AG04449 (cell line): ENCODE measurements at regions of chr1 and their contacts with region 1.

Region 1: GRCh38 chr1:174800216-174800851 is 199.4 kb upstream of the CACYBP start:
- DNase-seq: no peak
- H3K4me3 ChIP-seq: peak overlapping the region; percentile 63
- CTCF ChIP-seq: no peak

Region 2: DNA sequence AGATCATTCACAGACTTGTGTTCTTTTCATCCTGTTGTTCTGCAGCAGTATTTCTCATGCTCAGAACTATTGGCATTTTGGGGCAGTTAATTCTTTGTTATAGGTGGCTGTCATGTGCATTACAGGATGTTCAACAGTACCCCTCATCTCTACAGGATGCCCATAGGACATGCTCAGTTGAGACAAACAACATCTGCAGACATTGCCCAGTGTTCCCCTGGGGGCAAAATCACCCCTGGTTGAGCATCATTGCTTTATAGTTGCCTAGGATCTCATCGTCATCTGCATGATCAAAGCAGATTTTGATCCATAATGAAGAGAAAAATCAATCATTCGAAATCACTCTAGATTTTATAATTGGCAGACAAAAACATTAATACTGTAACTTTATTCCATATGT is 23.1 kb before region 1 on chr1:
- CTCF ChIA-PET with region 1: no interaction called
- POLR2A ChIA-PET with region 1: no interaction called
- DNase-seq: no peak
- H3K4me3 ChIP-seq: no peak overlapping the region
- CTCF ChIP-seq: no peak

Region 3: DNA sequence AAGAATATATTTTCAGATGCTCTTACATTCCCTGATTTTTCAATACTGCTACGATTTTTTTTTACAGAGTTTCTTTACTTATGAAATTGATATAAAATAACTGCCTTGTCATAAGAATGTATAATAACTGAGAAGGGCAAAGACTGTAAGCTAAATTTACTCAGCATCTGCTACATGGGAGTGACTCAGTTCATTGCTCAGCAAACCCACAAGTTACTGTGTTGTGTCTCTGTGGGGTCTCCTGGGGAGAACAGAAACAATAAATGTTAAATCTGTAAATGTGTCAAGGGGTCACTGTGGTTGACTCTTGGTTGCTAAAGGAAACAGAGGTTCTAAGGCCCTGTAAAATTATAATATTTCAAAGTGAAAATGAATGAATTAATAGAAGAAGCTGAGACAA is 10.9 kb before region 1 on chr1:
- CTCF ChIA-PET with region 1: interaction called, 3 read pairs
- POLR2A ChIA-PET with region 1: interaction called, 10 read pairs
- DNase-seq: peak; percentile 61
- H3K4me3 ChIP-seq: no peak overlapping the region
- CTCF ChIP-seq: no peak